ENCODE measurements at regions of chr14 and their contacts with region 1.

Region 1: GRCh38 chr14:77028384-77029231 is at the start of gene IRF2BPL:
- DNase-seq: peak; percentile 95
- H3K4me3 ChIP-seq: peak within 1 kb of the TSS; percentile 73
- H3K27me3 ChIP-seq: no peaks in the 10 kb centered on the region
- CTCF ChIP-seq: no peak
- polyA plus RNA-seq, gene IRF2BPL: 11.3 and 17.6 TPM in 2 replicates

Region 2: DNA sequence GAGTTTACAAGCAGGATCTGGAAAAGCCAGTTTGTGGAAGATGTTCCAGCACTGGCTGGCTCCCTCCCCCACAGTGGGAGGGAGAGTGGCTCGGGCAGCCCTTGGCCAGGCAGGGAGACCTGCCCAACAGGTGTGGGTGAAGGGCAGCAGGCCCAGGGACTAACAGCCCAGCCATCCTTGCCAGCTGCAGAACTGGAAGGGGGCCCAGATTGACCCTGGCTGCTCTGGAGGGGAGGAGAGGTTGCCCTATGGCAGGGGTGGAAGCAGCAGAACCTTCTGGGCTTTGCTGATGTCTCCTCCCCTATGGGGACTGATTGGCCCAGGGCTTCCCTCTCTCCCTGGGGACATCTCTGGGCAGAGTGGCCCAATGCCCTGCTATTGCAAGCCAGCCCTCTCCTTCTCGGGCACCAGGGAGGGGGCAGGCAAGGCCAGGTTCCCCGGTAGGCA is 20.6 kb before region 1 on chr14:
- CTCF ChIA-PET with region 1: no interaction called
- POLR2A ChIA-PET with region 1: no interaction called
- DNase-seq: no peak
- H3K4me3 ChIP-seq: no peak overlapping the region
- H3K27me3 ChIP-seq: no peaks in the 10 kb centered on the region
- CTCF ChIP-seq: no peak

Region 3: DNA sequence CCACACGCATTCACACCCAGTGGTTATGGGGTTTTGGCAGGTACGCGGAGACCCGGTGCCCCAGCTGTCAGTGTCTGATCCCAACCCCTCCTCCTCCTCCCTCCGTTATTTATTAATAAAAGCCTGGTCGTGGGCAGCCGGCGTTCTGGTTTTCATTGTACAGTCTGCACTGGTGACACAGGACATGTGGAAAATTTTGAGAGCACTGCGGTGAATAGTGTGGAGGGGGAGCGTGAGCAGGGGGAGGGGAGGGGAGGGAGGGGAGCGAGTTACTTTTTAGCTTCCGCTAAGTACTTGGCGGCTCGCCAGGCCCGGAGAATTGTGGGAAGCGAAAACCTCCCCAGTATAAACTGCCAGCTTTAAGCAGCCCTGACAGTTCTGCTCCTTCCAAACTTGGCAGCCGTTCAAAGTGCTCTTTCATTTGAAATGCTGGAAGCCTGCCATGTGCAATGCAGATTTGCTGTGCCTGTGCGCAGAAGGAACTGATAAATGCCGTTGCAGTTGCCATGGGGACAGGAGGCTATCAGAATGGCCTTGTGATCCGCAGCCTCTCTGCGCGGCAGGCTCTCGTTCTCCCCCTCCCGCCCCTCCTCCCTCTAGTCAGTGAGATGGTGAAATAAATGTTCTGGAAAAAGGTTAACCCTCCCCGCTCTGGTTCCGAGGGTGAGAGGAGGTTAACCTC is 11.6 kb after region 1 on chr14:
- CTCF ChIA-PET with region 1: interaction called, 15 read pairs
- POLR2A ChIA-PET with region 1: interaction called, 3 read pairs
- DNase-seq: peak; percentile 94
- H3K4me3 ChIP-seq: peak overlapping the region; percentile 22
- H3K27me3 ChIP-seq: no peaks in the 10 kb centered on the region
- CTCF ChIP-seq: no peak

Region 4: GRCh38 chr14:77275601-77276017 is 247.0 kb after region 1 on chr14:
- CTCF ChIA-PET with region 1: no interaction called
- POLR2A ChIA-PET with region 1: no interaction called
- DNase-seq: no peak
- H3K4me3 ChIP-seq: no peak overlapping the region
- H3K27me3 ChIP-seq: peaks cover 4% of the 10 kb centered on the region
- CTCF ChIP-seq: no peak

Measured in BJ (cell line).